CD4-positive, alpha-beta T cell (primary cell): ENCODE measurements at regions of chr10 and their contacts with region 1.

Region 1: GRCh38 chr10:14003517-14004184 is 327.1 kb downstream of the FRMD4A start:
- DNase-seq: peak in 5 of 14 experiments; percentile 18 to 64 (median 59)
- ATAC-seq: peak; percentile 88
- H3K4me3 ChIP-seq: no peak overlapping the region
- H3K4me3 Mint-ChIP-seq: peak overlapping the region; percentile 34
- H3K27ac ChIP-seq: peak overlapping the region in 1 of 2 donors; percentile 36
- H3K27ac Mint-ChIP-seq: peak overlapping the region; percentile 52
- H3K4me1 ChIP-seq: peaks cover 33% of the 10 kb centered on the region
- H3K4me1 Mint-ChIP-seq: peaks cover 56% of the 10 kb centered on the region
- H3K27me3 ChIP-seq: no peaks in the 10 kb centered on the region
- H3K27me3 Mint-ChIP-seq: no peaks in the 10 kb centered on the region
- CTCF ChIP-seq: no peak

Region 2: GRCh38 chr10:14016011-14016536 is 12.4 kb after region 1 on chr10:
- CTCF ChIA-PET with region 1: no interaction called
- POLR2A ChIA-PET with region 1: no interaction called
- intact Hi-C with region 1: no loop called
- DNase-seq: peak in 6 of 14 experiments; percentile 12 to 56 (median 38)
- ATAC-seq: peak; percentile 71
- H3K4me3 ChIP-seq: no peak overlapping the region
- H3K4me3 Mint-ChIP-seq: no peak overlapping the region
- H3K27ac ChIP-seq: no peak overlapping the region
- H3K27ac Mint-ChIP-seq: peak overlapping the region; percentile 60
- H3K4me1 ChIP-seq: peaks cover 14% of the 10 kb centered on the region
- H3K4me1 Mint-ChIP-seq: peaks cover 39% of the 10 kb centered on the region
- H3K27me3 ChIP-seq: peaks cover 0 to 4% of the 10 kb centered on the region in 2 experiments
- H3K27me3 Mint-ChIP-seq: no peaks in the 10 kb centered on the region
- CTCF ChIP-seq: no peak

Region 3: GRCh38 chr10:14039968-14040671 is 36.5 kb after region 1 on chr10:
- CTCF ChIA-PET with region 1: no interaction called
- POLR2A ChIA-PET with region 1: no interaction called
- intact Hi-C with region 1: loop called in 1 of 2 experiments (anchors 5 kb)
- DNase-seq: no peak
- ATAC-seq: no peak
- H3K4me3 ChIP-seq: no peak overlapping the region
- H3K4me3 Mint-ChIP-seq: no peak overlapping the region
- H3K27ac ChIP-seq: no peak overlapping the region
- H3K27ac Mint-ChIP-seq: no peak overlapping the region
- H3K4me1 ChIP-seq: no peaks in the 10 kb centered on the region
- H3K4me1 Mint-ChIP-seq: peaks cover 11% of the 10 kb centered on the region
- H3K27me3 ChIP-seq: no peaks in the 10 kb centered on the region
- H3K27me3 Mint-ChIP-seq: no peaks in the 10 kb centered on the region
- CTCF ChIP-seq: no peak